ENCODE measurements at regions of chr17 and their contacts with region 1.

Region 1: DNA sequence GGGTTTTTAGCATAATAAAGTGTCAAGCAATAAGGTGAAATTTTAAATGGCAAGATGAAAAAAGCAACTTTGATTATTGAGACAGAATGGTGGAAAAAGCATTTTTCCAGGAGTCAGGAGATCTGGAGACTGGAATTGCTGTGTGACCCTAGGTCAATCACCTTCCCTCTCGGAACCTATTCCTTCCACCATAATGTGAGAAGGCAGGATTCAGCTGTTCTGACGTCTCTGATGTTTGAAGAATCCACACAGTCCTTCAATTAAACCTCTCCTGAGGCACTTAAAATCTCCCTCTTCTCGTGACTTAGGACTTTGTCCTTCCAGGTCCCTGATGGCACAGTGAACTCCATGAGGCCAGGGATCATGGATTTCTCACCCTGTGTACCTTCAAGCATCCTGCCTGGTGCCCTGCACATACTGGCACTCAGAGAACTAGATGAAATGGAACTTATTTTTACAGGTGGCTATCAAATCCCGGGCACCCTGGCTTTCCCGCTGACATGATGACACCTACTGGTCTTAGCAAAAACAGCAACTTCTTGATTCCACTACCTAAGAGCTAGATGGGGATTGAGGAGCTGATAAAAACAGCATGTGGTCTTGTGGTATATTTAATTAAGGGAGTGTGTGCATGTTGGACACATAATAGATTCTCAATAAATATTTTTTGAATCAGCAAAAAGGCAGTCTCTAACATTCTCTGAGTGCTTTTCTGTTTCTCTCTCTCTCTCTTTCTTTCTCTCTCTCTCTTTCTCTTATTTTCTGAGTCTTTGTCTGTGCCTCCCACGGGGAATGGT is 2.3 kb upstream of the CCDC182 start:
- DNase-seq: peak; percentile 52
- ATAC-seq: peak; percentile 84
- H3K4me3 ChIP-seq: no peak overlapping the region
- H3K27ac ChIP-seq: no peak overlapping the region
- H3K4me1 ChIP-seq: no peaks in the 10 kb centered on the region
- H3K27me3 ChIP-seq: peaks cover 20% of the 10 kb centered on the region
- CTCF ChIP-seq: peak; percentile 91

Region 2: GRCh38 chr17:57130761-57131461 is 616.5 kb before region 1 on chr17:
- CTCF ChIA-PET with region 1: interaction called, 6 read pairs
- POLR2A ChIA-PET with region 1: no interaction called
- in situ Hi-C with region 1: no loop called
- intact Hi-C with region 1: loop called (anchors 2 kb)
- DNase-seq: peak; percentile 56
- ATAC-seq: peak; percentile 96
- H3K4me3 ChIP-seq: peak overlapping the region; percentile 19 to 51; a peak in 3 of 4 replicates
- H3K27ac ChIP-seq: no peak overlapping the region
- H3K4me1 ChIP-seq: peaks cover 6% of the 10 kb centered on the region
- H3K27me3 ChIP-seq: no peaks in the 10 kb centered on the region
- CTCF ChIP-seq: peak; percentile 94

Region 3: DNA sequence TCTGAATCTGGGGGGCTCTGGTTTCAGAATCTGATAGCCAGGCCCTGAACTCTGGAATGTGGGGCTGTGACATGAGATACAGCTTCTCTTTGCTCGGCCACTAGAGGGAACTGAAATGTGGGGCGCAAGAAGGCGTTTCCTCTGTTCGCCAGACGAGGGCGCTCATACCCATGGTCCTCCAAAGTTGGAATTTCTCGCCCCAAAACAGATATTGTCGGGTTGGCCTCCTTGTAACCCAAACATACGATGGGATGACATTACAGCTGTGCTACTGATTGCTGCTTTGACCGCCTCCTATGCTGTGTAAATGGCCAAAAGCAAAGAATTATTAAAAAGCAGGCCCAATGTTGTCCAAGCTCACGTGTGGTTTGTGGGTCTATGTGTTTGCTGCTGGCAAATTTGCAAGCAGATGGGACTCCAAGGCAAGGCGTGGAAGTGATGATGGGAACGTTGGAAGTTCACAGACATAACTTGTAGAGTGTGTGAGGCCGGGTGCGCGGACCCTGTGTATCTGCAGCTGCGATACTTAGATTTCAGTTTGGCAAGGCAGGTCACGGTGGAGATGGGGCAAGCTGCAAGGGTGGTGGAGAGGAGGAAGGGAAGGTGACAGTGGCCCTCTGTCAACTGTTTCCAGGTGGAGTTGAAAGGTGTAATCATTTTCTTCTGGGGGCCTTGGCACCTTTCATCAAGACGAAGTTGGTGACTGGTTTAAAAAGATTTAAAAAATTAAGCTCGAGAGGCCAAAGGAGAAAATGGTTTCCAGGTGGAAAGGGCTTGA is 504.1 kb before region 1 on chr17:
- CTCF ChIA-PET with region 1: interaction called, 7 read pairs
- POLR2A ChIA-PET with region 1: no interaction called
- in situ Hi-C with region 1: no loop called
- intact Hi-C with region 1: loop called (anchors 2 kb)
- DNase-seq: peak; percentile 59
- ATAC-seq: peak; percentile 89
- H3K4me3 ChIP-seq: no peak overlapping the region
- H3K27ac ChIP-seq: no peak overlapping the region
- H3K4me1 ChIP-seq: no peaks in the 10 kb centered on the region
- H3K27me3 ChIP-seq: peaks cover 7% of the 10 kb centered on the region; the same call in 1 of the 2 replicates
- CTCF ChIP-seq: peak; percentile 100

Region 4: DNA sequence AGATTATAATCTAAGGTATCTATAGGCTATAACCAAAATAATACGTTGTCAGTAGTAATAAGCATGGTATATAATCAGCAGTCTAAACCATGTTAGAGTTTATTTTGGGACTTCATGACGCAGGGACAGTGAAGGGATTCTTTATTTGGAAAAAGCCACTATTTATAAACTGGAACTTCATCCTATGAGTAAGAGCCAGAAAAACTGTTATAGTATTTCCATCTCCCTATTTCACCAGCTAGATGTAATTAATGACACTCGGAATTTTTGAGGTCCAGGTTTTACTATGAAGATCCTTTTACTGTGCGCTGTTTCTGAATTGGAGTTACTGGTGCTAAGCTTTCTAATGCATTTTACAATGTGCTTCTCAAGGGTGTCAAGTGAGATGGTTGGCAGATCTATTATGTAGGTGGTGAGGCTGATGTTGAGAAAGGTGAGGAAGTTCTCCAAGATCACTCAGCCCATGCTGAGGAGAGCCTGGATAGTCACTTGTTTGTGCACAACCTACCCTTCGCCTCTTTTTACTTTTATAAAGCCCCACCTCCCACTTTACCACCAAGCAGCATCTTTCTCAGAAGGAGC is 341.8 kb before region 1 on chr17:
- CTCF ChIA-PET with region 1: no interaction called
- POLR2A ChIA-PET with region 1: interaction called, 11 read pairs
- in situ Hi-C with region 1: no loop called
- intact Hi-C with region 1: no loop called
- DNase-seq: no peak
- ATAC-seq: no peak
- H3K4me3 ChIP-seq: no peak overlapping the region
- H3K27ac ChIP-seq: no peak overlapping the region
- H3K4me1 ChIP-seq: peaks cover 6% of the 10 kb centered on the region; the same call in 1 of the 2 replicates
- H3K27me3 ChIP-seq: no peaks in the 10 kb centered on the region
- CTCF ChIP-seq: no peak

Region 5: GRCh38 chr17:57788725-57789124 is 41.3 kb after region 1 on chr17:
- CTCF ChIA-PET with region 1: no interaction called
- POLR2A ChIA-PET with region 1: no interaction called
- in situ Hi-C with region 1: no loop called
- intact Hi-C with region 1: no loop called
- DNase-seq: no peak
- ATAC-seq: no peak
- H3K4me3 ChIP-seq: no peak overlapping the region
- H3K27ac ChIP-seq: no peak overlapping the region
- H3K4me1 ChIP-seq: no peaks in the 10 kb centered on the region
- H3K27me3 ChIP-seq: peaks cover 45% of the 10 kb centered on the region
- CTCF ChIP-seq: no peak

Region 6: DNA sequence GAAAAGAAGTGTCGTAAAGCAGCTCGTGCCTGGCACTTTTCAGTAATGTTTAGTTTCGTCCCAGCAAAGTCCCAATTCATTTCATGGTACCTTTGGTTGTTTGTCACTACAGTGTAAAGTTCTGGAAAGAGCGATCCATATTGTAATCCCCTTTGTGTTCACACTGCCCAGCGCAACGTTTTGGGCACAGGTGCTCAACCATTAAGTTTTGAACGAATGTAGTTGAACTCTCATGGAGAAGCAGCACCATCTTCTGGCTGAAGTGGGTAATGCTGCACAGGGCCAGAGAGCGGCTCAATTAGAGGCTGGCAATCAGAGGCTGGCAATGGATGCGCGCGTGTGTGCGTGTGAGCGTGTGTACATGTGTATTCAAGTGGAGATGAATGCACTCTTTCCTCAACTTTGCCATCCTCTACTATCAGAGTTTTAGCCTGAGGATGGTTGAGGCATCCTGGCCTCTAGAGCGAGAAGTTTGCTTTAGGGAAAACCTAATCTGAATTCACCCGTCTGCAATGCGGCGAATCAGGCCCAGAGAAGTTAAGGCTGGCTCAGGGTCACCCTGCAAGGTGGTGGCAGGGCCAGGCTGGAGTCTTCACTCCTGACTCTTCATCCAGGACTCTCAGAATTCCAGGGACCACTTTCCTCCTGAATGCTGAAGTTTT is 365.7 kb after region 1 on chr17:
- CTCF ChIA-PET with region 1: no interaction called
- POLR2A ChIA-PET with region 1: no interaction called
- in situ Hi-C with region 1: no loop called
- intact Hi-C with region 1: no loop called
- DNase-seq: peak; percentile 70
- ATAC-seq: peak; percentile 88
- H3K4me3 ChIP-seq: no peak overlapping the region
- H3K27ac ChIP-seq: no peak overlapping the region
- H3K4me1 ChIP-seq: no peaks in the 10 kb centered on the region
- H3K27me3 ChIP-seq: no peaks in the 10 kb centered on the region
- CTCF ChIP-seq: peak; percentile 97

Measured in Panc1 (cell line).